PC-3 (cell line): ENCODE measurements at regions of chr1 and their contacts with region 1.

Region 1: GRCh38 chr1:210360852-210361477 is 32.3 kb downstream of the HHAT start:
- DNase-seq: peak; percentile 77
- ATAC-seq: peak; percentile 98
- H3K4me3 ChIP-seq: no peak overlapping the region
- H3K27ac ChIP-seq: no peak overlapping the region
- H3K4me1 ChIP-seq: peaks cover 5% of the 10 kb centered on the region; the same call in 1 of the 2 replicates
- H3K27me3 ChIP-seq: no peaks in the 10 kb centered on the region
- CTCF ChIP-seq: peak; percentile 82

Region 2: GRCh38 chr1:209827384-209828262 is 533.3 kb before region 1 on chr1 and contains the start of gene UTP25:
- CTCF ChIA-PET with region 1: no interaction called
- POLR2A ChIA-PET with region 1: no interaction called
- intact Hi-C with region 1: no loop called
- DNase-seq: peak; percentile 99
- ATAC-seq: peak; percentile 28
- H3K4me3 ChIP-seq: peak within 1 kb of the TSS; percentile 83
- H3K27ac ChIP-seq: peak within 1 kb of the TSS; percentile 95
- H3K4me1 ChIP-seq: peaks cover 80% of the 10 kb centered on the region
- H3K27me3 ChIP-seq: no peaks in the 10 kb centered on the region
- CTCF ChIP-seq: peak; percentile 81
- total RNA-seq, gene UTP25: 14.3 and 15.3 TPM in 2 replicates

Region 3: DNA sequence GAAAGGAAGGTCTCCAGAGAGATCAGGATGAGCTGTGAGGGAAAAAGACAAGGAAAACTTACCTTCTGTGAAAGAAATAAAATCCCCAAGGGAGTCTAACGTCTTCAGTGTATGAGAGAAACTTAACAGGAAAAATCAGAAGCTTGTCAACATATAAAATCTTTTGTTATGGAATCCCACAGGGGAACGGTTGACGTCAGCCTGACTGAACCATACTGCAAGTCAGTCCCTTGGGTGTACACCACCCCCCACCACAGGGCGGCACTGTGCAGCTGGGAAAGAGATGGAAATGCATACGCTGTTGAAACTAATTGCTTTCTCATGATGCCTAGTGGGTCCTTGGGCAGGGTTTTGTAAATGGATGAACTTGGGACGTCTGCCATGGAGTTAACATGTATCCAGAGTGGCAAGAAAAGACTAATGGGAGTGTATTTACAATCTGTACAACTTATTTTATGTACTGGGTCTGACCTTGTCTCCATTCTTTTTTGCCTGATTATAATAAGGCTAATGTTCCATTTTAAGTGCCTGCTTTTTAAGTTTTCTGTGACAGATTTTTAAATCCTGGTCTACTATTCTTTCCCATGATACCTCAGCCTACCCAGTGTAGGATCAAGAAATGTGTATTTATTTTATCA is 510.5 kb before region 1 on chr1:
- CTCF ChIA-PET with region 1: interaction called, 11 read pairs
- POLR2A ChIA-PET with region 1: no interaction called
- intact Hi-C with region 1: no loop called
- DNase-seq: peak; percentile 89
- ATAC-seq: peak; percentile 99
- H3K4me3 ChIP-seq: no peak overlapping the region
- H3K27ac ChIP-seq: peak overlapping the region; percentile 15; the same call in 1 of the 2 replicates
- H3K4me1 ChIP-seq: no peaks in the 10 kb centered on the region
- H3K27me3 ChIP-seq: no peaks in the 10 kb centered on the region
- CTCF ChIP-seq: peak; percentile 97

Region 4: GRCh38 chr1:210335001-210335400 is 26.0 kb before region 1 on chr1:
- CTCF ChIA-PET with region 1: interaction called, 4 read pairs
- POLR2A ChIA-PET with region 1: no interaction called
- intact Hi-C with region 1: loop called (anchors 2 kb)
- DNase-seq: peak; percentile 51
- ATAC-seq: peak; percentile 21
- H3K4me3 ChIP-seq: no peak overlapping the region
- H3K27ac ChIP-seq: no peak overlapping the region
- H3K4me1 ChIP-seq: peaks cover 38% of the 10 kb centered on the region
- H3K27me3 ChIP-seq: no peaks in the 10 kb centered on the region
- CTCF ChIP-seq: no peak

Region 5: GRCh38 chr1:210400043-210400840 is 39.3 kb after region 1 on chr1:
- CTCF ChIA-PET with region 1: interaction called, 22 read pairs
- POLR2A ChIA-PET with region 1: no interaction called
- intact Hi-C with region 1: loop called (anchors 1 kb)
- DNase-seq: peak; percentile 81
- ATAC-seq: peak; percentile 98
- H3K4me3 ChIP-seq: no peak overlapping the region
- H3K27ac ChIP-seq: 0 out of 2 replicates have a peak overlapping the region, but pooled peaks have one; percentile 16
- H3K4me1 ChIP-seq: peaks cover 9% of the 10 kb centered on the region
- H3K27me3 ChIP-seq: no peaks in the 10 kb centered on the region
- CTCF ChIP-seq: peak; percentile 97